ENCODE measurements at regions of chr13 and their contacts with region 1.

Region 1: GRCh38 chr13:51557875-51558612 is 26.2 kb upstream of the WDFY2 start:
- DNase-seq: no peak
- ATAC-seq: no peak
- H3K4me3 ChIP-seq: no peak overlapping the region
- H3K4me3 Mint-ChIP-seq: no peak overlapping the region
- H3K27ac ChIP-seq: no peak overlapping the region
- H3K27ac Mint-ChIP-seq: no peak overlapping the region
- H3K4me1 ChIP-seq: peaks cover 5% of the 10 kb centered on the region
- H3K4me1 Mint-ChIP-seq: no peaks in the 10 kb centered on the region
- H3K27me3 ChIP-seq: no peaks in the 10 kb centered on the region
- H3K27me3 Mint-ChIP-seq: no peaks in the 10 kb centered on the region
- CTCF ChIP-seq: no peak

Region 2: DNA sequence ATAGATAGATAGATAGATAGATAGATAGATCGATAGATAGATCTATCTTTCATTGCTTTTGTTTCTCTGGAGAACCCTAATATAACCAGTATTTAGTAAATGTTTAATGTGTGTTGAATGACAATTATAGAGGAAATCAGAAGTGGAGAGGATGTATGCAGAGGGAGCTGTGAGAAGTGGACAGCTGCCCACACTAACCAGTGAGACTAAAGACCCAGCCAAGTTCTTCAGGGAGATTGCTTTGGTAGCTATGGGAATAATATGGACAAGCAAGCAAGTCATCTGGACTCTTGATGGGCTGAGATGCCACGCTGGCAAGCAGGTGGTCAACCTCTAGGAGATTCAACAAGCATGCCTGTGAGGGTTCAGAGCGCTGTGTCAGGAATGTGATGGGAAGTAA is 90.3 kb before region 1 on chr13:
- CTCF ChIA-PET with region 1: no interaction called
- POLR2A ChIA-PET with region 1: no interaction called
- intact Hi-C with region 1: no loop called
- DNase-seq: no peak
- ATAC-seq: no peak
- H3K4me3 ChIP-seq: no peak overlapping the region
- H3K4me3 Mint-ChIP-seq: no peak overlapping the region
- H3K27ac ChIP-seq: no peak overlapping the region
- H3K27ac Mint-ChIP-seq: no peak overlapping the region
- H3K4me1 ChIP-seq: no peaks in the 10 kb centered on the region
- H3K4me1 Mint-ChIP-seq: no peaks in the 10 kb centered on the region
- H3K27me3 ChIP-seq: no peaks in the 10 kb centered on the region
- H3K27me3 Mint-ChIP-seq: no peaks in the 10 kb centered on the region
- CTCF ChIP-seq: no peak

Region 3: GRCh38 chr13:51518827-51519226 is 39.2 kb before region 1 on chr13:
- CTCF ChIA-PET with region 1: no interaction called
- POLR2A ChIA-PET with region 1: no interaction called
- intact Hi-C with region 1: loop called in 1 of 2 experiments (anchors 5 kb)
- DNase-seq: peak in 4 of 14 experiments; percentile 3 to 59 (median 37)
- ATAC-seq: no peak
- H3K4me3 ChIP-seq: no peak overlapping the region
- H3K4me3 Mint-ChIP-seq: no peak overlapping the region
- H3K27ac ChIP-seq: no peak overlapping the region
- H3K27ac Mint-ChIP-seq: no peak overlapping the region
- H3K4me1 ChIP-seq: peaks cover 15% of the 10 kb centered on the region
- H3K4me1 Mint-ChIP-seq: peaks cover 22% of the 10 kb centered on the region
- H3K27me3 ChIP-seq: no peaks in the 10 kb centered on the region
- H3K27me3 Mint-ChIP-seq: no peaks in the 10 kb centered on the region
- CTCF ChIP-seq: no peak

Measured in CD4-positive, alpha-beta T cell (primary cell).